ENCODE measurements at regions of chr2 and their contacts with region 1.

Region 1: GRCh38 chr2:133568172-133568571 is at the start of gene NCKAP5:
- DNase-seq: no peak
- H3K4me3 ChIP-seq: peak within 1 kb of the TSS; percentile 52
- CTCF ChIP-seq: no peak

Region 2: GRCh38 chr2:133266041-133266925 is 301.9 kb before region 1 on chr2:
- CTCF ChIA-PET with region 1: interaction called, 14 read pairs
- POLR2A ChIA-PET with region 1: no interaction called
- DNase-seq: no peak
- H3K4me3 ChIP-seq: peak overlapping the region; percentile 63
- CTCF ChIP-seq: peak; percentile 12

Region 3: DNA sequence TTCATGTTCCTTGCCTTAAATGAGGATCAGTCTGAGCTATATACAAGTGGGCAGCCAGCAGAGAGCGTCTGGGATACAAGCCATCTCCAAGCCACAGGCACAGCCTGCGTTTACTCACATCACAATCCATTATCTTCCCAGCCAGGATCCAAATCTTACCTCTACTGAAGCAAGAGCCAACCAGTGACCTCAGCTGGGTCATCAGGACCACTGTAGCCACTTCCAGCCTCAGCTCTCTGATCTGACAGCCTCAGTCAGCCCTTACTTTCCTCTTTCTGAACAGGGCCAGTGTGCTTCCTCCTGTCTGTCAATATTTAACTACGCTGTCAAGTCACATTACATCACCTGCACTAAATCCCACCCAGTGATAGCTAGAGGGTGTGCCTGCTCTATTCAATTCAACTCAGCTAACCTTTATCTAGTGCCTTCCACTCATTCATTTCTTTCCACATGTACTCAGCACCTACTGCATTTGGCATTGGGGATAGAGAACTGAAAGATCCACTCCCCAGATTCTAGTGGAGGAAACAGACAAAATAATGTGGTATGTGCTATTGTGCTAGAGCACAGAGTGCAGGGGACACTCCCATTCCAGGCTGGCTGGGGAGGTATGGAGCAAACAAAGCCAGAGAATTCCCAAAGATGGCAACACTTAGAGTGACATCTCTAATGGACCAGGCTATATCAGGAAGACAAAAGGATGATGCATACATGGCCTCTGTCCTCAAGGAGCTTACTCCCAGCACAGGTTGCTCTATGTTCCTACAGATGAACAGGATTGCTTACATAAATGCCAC is 146.5 kb before region 1 on chr2:
- CTCF ChIA-PET with region 1: no interaction called
- POLR2A ChIA-PET with region 1: no interaction called
- DNase-seq: no peak
- H3K4me3 ChIP-seq: no peak overlapping the region
- CTCF ChIP-seq: peak; percentile 10

Region 4: GRCh38 chr2:133581010-133581760 is 13.0 kb after region 1 on chr2:
- CTCF ChIA-PET with region 1: interaction called, 13 read pairs
- POLR2A ChIA-PET with region 1: no interaction called
- DNase-seq: no peak
- H3K4me3 ChIP-seq: no peak overlapping the region
- CTCF ChIP-seq: no peak

Region 5: GRCh38 chr2:133690780-133691179 is 122.6 kb after region 1 on chr2:
- CTCF ChIA-PET with region 1: no interaction called
- POLR2A ChIA-PET with region 1: no interaction called
- DNase-seq: no peak
- H3K4me3 ChIP-seq: no peak overlapping the region
- CTCF ChIP-seq: no peak

Measured in AG04449 (cell line).